ENCODE measurements at regions of chr13 and their contacts with region 1.

Region 1: GRCh38 chr13:42064259-42064658 is 15.8 kb downstream of the DGKH start:
- DNase-seq: no peak
- ATAC-seq: no peak
- H3K4me3 Mint-ChIP-seq: no peak overlapping the region
- H3K27ac Mint-ChIP-seq: no peak overlapping the region
- H3K4me1 Mint-ChIP-seq: peaks cover 6% of the 10 kb centered on the region
- H3K27me3 Mint-ChIP-seq: no peaks in the 10 kb centered on the region

Region 2: GRCh38 chr13:41931337-41931736 is 132.9 kb before region 1 on chr13:
- CTCF ChIA-PET with region 1: no interaction called
- POLR2A ChIA-PET with region 1: interaction called, 11 read pairs
- intact Hi-C with region 1: no loop called
- DNase-seq: no peak
- ATAC-seq: peak; percentile 53
- H3K4me3 Mint-ChIP-seq: no peak overlapping the region
- H3K27ac Mint-ChIP-seq: peak overlapping the region; percentile 60
- H3K4me1 Mint-ChIP-seq: peaks cover 64% of the 10 kb centered on the region
- H3K27me3 Mint-ChIP-seq: no peaks in the 10 kb centered on the region

Region 3: DNA sequence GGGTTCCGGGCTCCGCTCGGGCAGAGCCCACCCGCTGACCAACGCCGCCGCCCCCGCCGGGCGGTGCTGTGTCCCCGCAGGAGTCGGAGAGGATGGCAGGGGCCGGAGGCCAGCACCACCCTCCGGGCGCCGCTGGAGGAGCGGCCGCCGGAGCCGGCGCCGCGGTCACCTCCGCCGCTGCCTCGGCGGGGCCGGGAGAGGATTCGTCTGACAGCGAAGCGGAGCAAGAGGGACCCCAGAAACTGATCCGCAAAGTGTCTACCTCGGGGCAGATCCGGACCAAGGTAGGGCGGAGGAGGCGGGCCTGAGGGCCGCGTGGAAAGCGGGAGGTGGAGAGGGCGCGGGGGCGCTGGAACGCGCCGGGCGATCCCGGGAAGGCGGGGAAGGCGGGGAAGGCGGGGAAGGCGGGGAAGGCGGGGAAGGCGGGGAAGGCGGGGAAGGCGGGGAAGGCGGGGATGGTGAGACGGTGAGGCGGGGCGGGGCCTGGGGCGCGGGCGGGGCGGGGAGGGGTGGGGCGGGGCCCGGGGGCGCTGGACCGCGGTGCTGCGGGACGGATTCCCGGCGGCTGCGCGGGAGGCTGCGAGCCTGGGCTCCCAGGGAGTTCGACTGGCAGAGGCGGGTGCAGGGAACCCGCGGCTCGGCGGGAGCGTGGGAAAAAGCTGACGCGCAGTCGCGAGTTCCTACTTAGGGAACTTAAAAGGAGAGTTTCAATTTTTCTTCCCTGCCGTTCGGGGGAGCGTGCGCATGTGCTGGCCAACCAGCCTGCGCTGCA is 15.4 kb before region 1 on chr13:
- CTCF ChIA-PET with region 1: interaction called, 3 read pairs
- POLR2A ChIA-PET with region 1: interaction called, 11 read pairs
- intact Hi-C with region 1: no loop called
- DNase-seq: peak; percentile 82
- ATAC-seq: peak; percentile 68
- H3K4me3 Mint-ChIP-seq: peak overlapping the region; percentile 86
- H3K27ac Mint-ChIP-seq: no peak overlapping the region
- H3K4me1 Mint-ChIP-seq: peaks cover 24% of the 10 kb centered on the region
- H3K27me3 Mint-ChIP-seq: no peaks in the 10 kb centered on the region

Measured in activated CD4-positive, alpha-beta T cell treated with anti-CD3 and anti-CD28 coated beads for 36 hours (primary cell).